ENCODE measurements at regions of chr3 and their contacts with region 1.

Region 1: DNA sequence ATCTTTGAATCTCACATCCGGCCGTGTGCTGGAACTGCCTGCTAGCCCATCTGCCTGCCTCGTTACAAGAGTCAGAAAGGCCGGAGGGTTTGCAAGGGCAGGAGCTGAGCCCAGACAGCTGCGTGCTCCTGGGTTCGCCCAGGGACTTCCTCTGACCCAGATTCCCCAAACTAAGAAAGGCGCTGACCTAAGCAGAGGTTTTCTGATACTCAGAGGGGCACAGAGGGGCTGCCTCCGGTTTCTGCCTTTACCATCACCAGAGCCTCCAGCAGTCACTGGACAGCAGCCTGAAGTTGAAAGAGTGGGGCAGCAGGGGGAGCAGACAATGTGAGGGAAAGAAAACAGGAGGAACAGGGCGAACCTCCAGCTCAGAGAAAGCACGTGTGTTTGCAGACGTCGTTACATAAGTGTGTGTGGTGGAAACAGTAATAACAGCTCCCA is 33.4 kb upstream of the RAD18 start:
- DNase-seq: peak; percentile 85
- H3K4me3 ChIP-seq: no peak overlapping the region
- H3K27ac ChIP-seq: no peak overlapping the region
- H3K4me1 ChIP-seq: no peaks in the 10 kb centered on the region
- H3K27me3 ChIP-seq: no peaks in the 10 kb centered on the region
- CTCF ChIP-seq: peak; percentile 21 to 41 (median 34)
- POLR2A ChIP-seq: no peak

Region 2: GRCh38 chr3:8755563-8756237 is 241.0 kb before region 1 on chr3:
- intact Hi-C with region 1: no loop called
- DNase-seq: no peak
- H3K4me3 ChIP-seq: no peak overlapping the region
- H3K27ac ChIP-seq: no peak overlapping the region
- H3K4me1 ChIP-seq: no peaks in the 10 kb centered on the region
- H3K27me3 ChIP-seq: no peaks in the 10 kb centered on the region
- CTCF ChIP-seq: no peak
- POLR2A ChIP-seq: no peak

Region 3: GRCh38 chr3:9067352-9067975 is 70.8 kb after region 1 on chr3:
- intact Hi-C with region 1: loop called (anchors 10 kb)
- DNase-seq: peak; percentile 76
- H3K4me3 ChIP-seq: no peak overlapping the region
- H3K27ac ChIP-seq: no peak overlapping the region
- H3K4me1 ChIP-seq: peaks cover 10% of the 10 kb centered on the region
- H3K27me3 ChIP-seq: no peaks in the 10 kb centered on the region
- CTCF ChIP-seq: peak; percentile 83 to 93 (median 92)
- POLR2A ChIP-seq: no peak